Endothelial cell of umbilical vein (primary cell): ENCODE measurements at regions of chr6 and their contacts with region 1.

Region 1: GRCh38 chr6:43143235-43144124 is 27.6 kb upstream of the SRF start:
- DNase-seq: peak; percentile 84
- H3K4me3 ChIP-seq: no peak overlapping the region
- H3K27ac ChIP-seq: no peak overlapping the region
- H3K4me1 ChIP-seq: no peaks in the 10 kb centered on the region
- H3K27me3 ChIP-seq: no peaks in the 10 kb centered on the region
- CTCF ChIP-seq: peak; percentile 98 to 100
- POLR2A ChIP-seq: no peak

Region 2: GRCh38 chr6:42661540-42662153 is 481.8 kb before region 1 on chr6:
- CTCF ChIA-PET with region 1: no interaction called
- POLR2A ChIA-PET with region 1: no interaction called
- dilution Hi-C with region 1: no loop called
- intact Hi-C with region 1: loop called (anchors 1 kb)
- DNase-seq: peak; percentile 73
- H3K4me3 ChIP-seq: no peak overlapping the region
- H3K27ac ChIP-seq: no peak overlapping the region
- H3K4me1 ChIP-seq: no peaks in the 10 kb centered on the region
- H3K27me3 ChIP-seq: no peaks in the 10 kb centered on the region
- CTCF ChIP-seq: peak; percentile 71 to 75
- POLR2A ChIP-seq: no peak

Region 3: DNA sequence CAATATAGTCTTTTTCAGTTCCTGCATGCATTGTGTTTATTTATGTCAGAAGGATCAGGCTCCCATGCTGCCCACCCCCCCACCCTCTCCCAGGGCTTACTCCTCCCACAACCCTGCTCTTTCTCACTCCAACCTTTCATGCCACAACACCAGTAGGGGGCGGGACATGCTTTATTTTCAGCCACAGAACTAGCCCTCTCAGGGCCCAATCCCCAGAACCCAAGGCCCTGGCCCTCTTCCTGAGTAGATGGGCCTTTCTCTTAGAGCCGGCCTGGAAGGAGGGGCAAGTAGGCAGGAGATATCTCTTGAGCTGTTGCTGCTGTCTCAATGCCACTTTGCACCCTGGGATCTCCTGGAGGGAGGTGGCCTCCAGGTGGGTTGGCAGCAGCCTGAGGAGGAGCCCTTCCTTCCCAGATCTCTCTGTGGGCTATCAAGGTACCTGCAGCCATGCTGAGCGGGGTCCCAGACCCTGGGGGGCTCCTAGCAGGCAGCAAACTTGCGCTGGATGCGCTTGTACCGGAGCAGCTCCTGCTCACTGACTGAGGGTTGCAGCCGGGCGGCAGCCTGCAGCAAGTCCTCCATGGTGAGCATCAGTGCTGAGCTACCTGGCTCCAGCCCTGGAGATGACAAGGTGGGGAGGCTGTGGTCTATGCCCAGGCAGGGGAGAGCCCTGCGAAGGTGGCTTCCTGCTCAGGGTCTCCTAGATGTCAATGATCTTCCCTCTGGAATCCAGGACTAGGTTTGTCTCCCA is 179.4 kb before region 1 on chr6:
- CTCF ChIA-PET with region 1: interaction called, 12 read pairs
- POLR2A ChIA-PET with region 1: no interaction called
- dilution Hi-C with region 1: no loop called
- intact Hi-C with region 1: loop called (anchors 1 kb)
- DNase-seq: peak; percentile 50
- H3K4me3 ChIP-seq: no peak overlapping the region
- H3K27ac ChIP-seq: no peak overlapping the region
- H3K4me1 ChIP-seq: peaks cover 10% of the 10 kb centered on the region
- H3K27me3 ChIP-seq: no peaks in the 10 kb centered on the region
- CTCF ChIP-seq: peak; percentile 8 to 31
- POLR2A ChIP-seq: no peak

Region 4: GRCh38 chr6:43021270-43022047 is 122.0 kb before region 1 on chr6 and contains the start of gene RRP36:
- CTCF ChIA-PET with region 1: interaction called, 11 read pairs
- POLR2A ChIA-PET with region 1: no interaction called
- dilution Hi-C with region 1: no loop called
- intact Hi-C with region 1: no loop called
- DNase-seq: peak; percentile 67
- H3K4me3 ChIP-seq: peak within 1 kb of the TSS; percentile 74 to 98 (median 89)
- H3K27ac ChIP-seq: peak within 1 kb of the TSS; percentile 58
- H3K4me1 ChIP-seq: no peaks in the 10 kb centered on the region
- H3K27me3 ChIP-seq: no peaks in the 10 kb centered on the region
- CTCF ChIP-seq: no peak
- POLR2A ChIP-seq: peak; percentile 78
- total RNA-seq, gene RRP36: 103 TPM in 2 replicates

Region 5: GRCh38 chr6:43070028-43070632 is 73.3 kb before region 1 on chr6:
- CTCF ChIA-PET with region 1: interaction called, 22 read pairs
- POLR2A ChIA-PET with region 1: interaction called, 8 read pairs
- dilution Hi-C with region 1: no loop called
- intact Hi-C with region 1: loop called (anchors 1 kb)
- DNase-seq: peak; percentile 37
- H3K4me3 ChIP-seq: no peak overlapping the region
- H3K27ac ChIP-seq: no peak overlapping the region
- H3K4me1 ChIP-seq: no peaks in the 10 kb centered on the region
- H3K27me3 ChIP-seq: no peaks in the 10 kb centered on the region
- CTCF ChIP-seq: peak; percentile 48 to 49
- POLR2A ChIP-seq: no peak

Region 6: DNA sequence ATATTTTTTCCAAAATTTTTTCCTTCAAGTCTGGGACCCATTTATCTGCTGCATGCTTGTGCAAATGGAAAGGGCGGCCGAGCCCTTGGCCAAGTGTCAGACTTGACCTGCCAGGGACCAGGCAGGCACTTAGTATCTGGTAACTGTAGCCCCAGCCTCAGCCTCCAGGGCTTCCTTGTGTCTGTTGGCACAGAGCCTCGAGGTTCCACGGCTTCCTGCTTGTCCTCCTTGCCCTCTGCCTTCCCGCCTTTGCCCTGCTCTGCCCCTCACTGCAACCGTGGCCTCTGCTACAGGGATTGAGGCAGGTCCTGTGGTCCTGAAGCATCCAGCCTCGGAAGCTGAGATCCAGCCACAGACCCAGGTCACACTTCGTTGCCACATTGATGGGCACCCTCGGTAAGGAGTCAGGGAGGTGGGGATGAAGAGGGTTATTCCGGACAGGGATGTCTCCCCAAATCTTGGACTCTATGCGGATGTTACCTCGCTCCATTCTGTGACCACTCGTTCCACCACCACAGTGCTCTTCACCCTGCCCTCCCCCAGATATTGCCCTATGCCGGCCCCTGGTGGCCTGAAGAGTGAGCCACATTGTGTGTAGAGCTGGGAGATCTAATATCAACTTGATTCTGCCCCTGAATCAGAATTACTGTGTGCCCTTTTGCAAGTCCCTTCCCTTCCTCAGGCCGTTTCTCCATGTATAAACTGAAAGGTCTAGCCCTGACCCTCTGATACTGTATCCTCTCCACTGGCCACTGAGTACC is 13.9 kb before region 1 on chr6:
- CTCF ChIA-PET with region 1: interaction called, 19 read pairs
- POLR2A ChIA-PET with region 1: no interaction called
- dilution Hi-C with region 1: no loop called
- intact Hi-C with region 1: no loop called
- DNase-seq: peak; percentile 33
- H3K4me3 ChIP-seq: no peak overlapping the region
- H3K27ac ChIP-seq: no peak overlapping the region
- H3K4me1 ChIP-seq: no peaks in the 10 kb centered on the region
- H3K27me3 ChIP-seq: no peaks in the 10 kb centered on the region
- CTCF ChIP-seq: peak; percentile 46 to 56
- POLR2A ChIP-seq: no peak